Breast epithelium (tissue), 4 donors: ENCODE measurements at regions of chr14 and their contacts with region 1.

Region 1: DNA sequence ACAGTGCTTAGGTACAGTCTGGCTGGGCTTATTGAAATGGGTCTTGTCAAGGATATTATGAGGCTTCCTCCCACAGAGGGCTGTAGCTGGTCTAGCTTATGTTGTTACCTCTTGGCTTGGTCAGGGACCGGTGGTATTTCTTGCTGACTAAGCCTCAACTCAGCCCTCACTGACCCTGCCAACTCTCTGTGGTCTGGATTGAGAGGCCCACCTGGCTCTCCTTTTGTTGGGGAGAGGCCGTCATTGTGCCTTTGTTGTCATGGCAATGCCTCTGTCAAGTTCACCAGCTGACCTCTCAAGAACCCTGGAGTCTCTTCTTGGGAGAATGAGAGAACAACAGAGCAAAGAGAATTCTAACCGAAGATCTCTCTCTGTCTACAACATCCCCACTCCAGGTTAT is 245.6 kb upstream of the NPAS3 start:
- DNase-seq: no peak
- H3K4me3 ChIP-seq: no peak overlapping the region
- H3K27ac ChIP-seq: no peak overlapping the region
- H3K4me1 ChIP-seq: no peaks in the 10 kb centered on the region
- H3K27me3 ChIP-seq: no peaks in the 10 kb centered on the region
- CTCF ChIP-seq: no peak
- POLR2A ChIP-seq: no peak

Region 2: GRCh38 chr14:33774723-33775470 is 1081.8 kb after region 1 on chr14:
- intact Hi-C with region 1: loop called (anchors 5 kb)
- DNase-seq: no peak
- H3K4me3 ChIP-seq: no peak overlapping the region
- H3K27ac ChIP-seq: no peak overlapping the region
- H3K4me1 ChIP-seq: no peaks in the 10 kb centered on the region
- H3K27me3 ChIP-seq: no peaks in the 10 kb centered on the region
- CTCF ChIP-seq: no peak
- POLR2A ChIP-seq: no peak